ENCODE measurements at regions of chr19 and their contacts with region 1.

Region 1: GRCh38 chr19:38544959-38545315 is 72.8 kb downstream of the MAP4K1 start:
- DNase-seq: no peak

Region 2: DNA sequence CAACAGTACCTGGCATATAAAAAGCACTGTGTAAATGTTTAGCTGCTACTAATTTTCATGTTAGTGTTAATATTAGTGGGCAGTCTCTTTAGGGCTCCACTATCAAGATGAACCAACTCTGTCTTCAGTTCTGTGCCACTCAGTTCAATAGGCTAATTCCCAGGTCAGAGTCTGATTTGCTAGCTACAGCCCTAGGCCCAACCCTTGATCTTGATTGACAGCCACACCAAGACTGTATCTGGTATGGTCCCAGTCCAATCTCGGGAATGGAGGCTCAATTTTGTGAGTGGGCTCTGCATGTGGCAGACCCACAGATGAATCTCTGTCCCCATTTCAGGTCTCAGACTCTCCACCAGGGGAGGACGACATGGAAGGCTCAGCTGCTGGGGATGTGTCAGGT is 26.7 kb after region 1 on chr19:
- intact Hi-C with region 1: loop called in 1 of 2 experiments (anchors 1 kb)
- DNase-seq: no peak

Measured in posterior vena cava (tissue), 2 donors.